ENCODE measurements at regions of chr3 and their contacts with region 1.

Region 1: DNA sequence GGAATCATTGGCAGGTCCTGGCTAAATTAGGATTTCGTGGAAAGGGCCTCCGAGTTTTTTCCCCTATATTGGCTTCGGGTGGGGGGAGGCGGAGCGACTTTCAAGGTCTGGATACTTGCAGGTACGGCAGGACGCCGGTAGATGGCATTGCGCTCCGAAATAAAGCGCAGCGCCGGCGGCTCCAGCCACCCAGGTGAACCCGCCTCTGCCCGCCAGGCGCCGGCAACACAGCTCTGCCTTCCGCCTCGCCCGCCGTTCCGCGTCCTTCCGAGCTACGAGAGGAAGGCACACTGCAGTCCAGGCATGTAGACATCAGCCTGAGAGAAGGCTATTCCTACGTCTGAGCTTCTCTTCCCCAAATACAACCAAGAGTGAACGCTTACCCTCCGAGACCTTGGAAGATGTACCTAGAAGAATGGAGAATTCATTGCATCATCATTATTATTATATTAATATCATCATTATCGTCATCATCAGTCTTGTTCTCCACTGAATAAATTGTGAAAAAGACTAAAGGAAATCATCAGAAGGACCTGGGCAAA is 514.1 kb downstream of the MECOM start:
- DNase-seq: peak; percentile 4
- ATAC-seq: peak; percentile 99
- H3K4me3 ChIP-seq: no peak overlapping the region
- H3K27ac ChIP-seq: no peak overlapping the region
- H3K4me1 ChIP-seq: no peaks in the 10 kb centered on the region; the same call in 1 of the 2 replicates
- H3K27me3 ChIP-seq: peaks cover 4 to 30% of the 10 kb centered on the region in 2 experiments
- CTCF ChIP-seq: peak; percentile 76 to 88 (median 81)
- EP300 ChIP-seq: no peak
- POLR2A ChIP-seq: no peak
- RAD21 ChIP-seq: peak; percentile 64

Region 2: GRCh38 chr3:169165196-169166158 is 16.1 kb after region 1 on chr3:
- CTCF ChIA-PET with region 1: interaction called, 14 read pairs
- POLR2A ChIA-PET with region 1: no interaction called
- RAD21 ChIA-PET with region 1: no interaction called
- SMC1A ChIA-PET with region 1: interaction called, 4 read pairs
- in situ Hi-C with region 1: no loop called
- intact Hi-C with region 1: no loop called
- DNase-seq: no peak
- ATAC-seq: no peak
- H3K4me3 ChIP-seq: no peak overlapping the region
- H3K27ac ChIP-seq: no peak overlapping the region
- H3K4me1 ChIP-seq: no peaks in the 10 kb centered on the region
- H3K27me3 ChIP-seq: no peaks in the 10 kb centered on the region; a peak in 1 of 4 replicates
- CTCF ChIP-seq: no peak
- EP300 ChIP-seq: no peak
- POLR2A ChIP-seq: no peak
- RAD21 ChIP-seq: no peak

Region 3: DNA sequence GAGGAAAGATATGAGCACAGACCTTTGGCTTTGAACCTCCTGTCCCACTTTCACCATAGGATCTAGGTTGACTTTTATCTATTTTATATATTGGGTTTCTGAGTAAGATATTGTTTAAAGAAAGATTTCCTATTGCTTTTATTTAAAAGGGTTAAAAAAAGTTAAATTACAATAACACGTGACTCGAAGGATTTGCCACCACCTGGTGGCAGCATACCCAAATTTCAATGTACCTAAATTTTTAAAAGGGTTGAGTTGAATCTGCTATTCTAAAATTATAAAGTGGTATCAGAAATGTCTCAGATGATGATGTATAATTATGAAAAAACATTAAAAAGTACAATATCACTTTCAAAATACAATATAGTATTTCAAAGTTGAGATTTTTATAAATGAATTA is 145.7 kb after region 1 on chr3:
- CTCF ChIA-PET with region 1: interaction called, 5 read pairs
- POLR2A ChIA-PET with region 1: no interaction called
- RAD21 ChIA-PET with region 1: no interaction called
- SMC1A ChIA-PET with region 1: interaction called, 3 read pairs
- in situ Hi-C with region 1: no loop called
- intact Hi-C with region 1: loop called (anchors 5 kb)
- DNase-seq: no peak
- ATAC-seq: no peak
- H3K4me3 ChIP-seq: no peak overlapping the region
- H3K27ac ChIP-seq: no peak overlapping the region
- H3K4me1 ChIP-seq: no peaks in the 10 kb centered on the region
- H3K27me3 ChIP-seq: no peaks in the 10 kb centered on the region; a peak in 1 of 4 replicates
- CTCF ChIP-seq: peak in 2 of 3 experiments; percentile 8 to 13; a peak in 1 of 6 replicates
- EP300 ChIP-seq: no peak
- POLR2A ChIP-seq: no peak
- RAD21 ChIP-seq: 0 out of 2 replicates have a peak, but pooled peaks have one; percentile 2

Region 4: GRCh38 chr3:169668957-169669681 is 519.7 kb after region 1 on chr3:
- CTCF ChIA-PET with region 1: interaction called, 15 read pairs
- POLR2A ChIA-PET with region 1: no interaction called
- RAD21 ChIA-PET with region 1: interaction called, 15 read pairs
- SMC1A ChIA-PET with region 1: interaction called, 5 read pairs
- in situ Hi-C with region 1: loop called (anchors 10 kb)
- intact Hi-C with region 1: loop called (anchors 2 kb)
- DNase-seq: no peak
- ATAC-seq: peak; percentile 96
- H3K4me3 ChIP-seq: no peak overlapping the region
- H3K27ac ChIP-seq: no peak overlapping the region
- H3K4me1 ChIP-seq: no peaks in the 10 kb centered on the region
- H3K27me3 ChIP-seq: peaks cover 9 to 28% of the 10 kb centered on the region in 2 experiments
- CTCF ChIP-seq: peak; percentile 54 to 58 (median 56)
- EP300 ChIP-seq: no peak
- POLR2A ChIP-seq: no peak
- RAD21 ChIP-seq: peak; percentile 83

Region 5: GRCh38 chr3:169744366-169745054 is 595.1 kb after region 1 on chr3:
- CTCF ChIA-PET with region 1: interaction called, 36 read pairs
- POLR2A ChIA-PET with region 1: no interaction called
- RAD21 ChIA-PET with region 1: interaction called, 8 read pairs
- SMC1A ChIA-PET with region 1: interaction called, 12 read pairs
- in situ Hi-C with region 1: no loop called
- intact Hi-C with region 1: loop called (anchors 5 kb)
- DNase-seq: no peak
- ATAC-seq: peak; percentile 48; the same call in 2 of the 3 replicates
- H3K4me3 ChIP-seq: no peak overlapping the region
- H3K27ac ChIP-seq: no peak overlapping the region
- H3K4me1 ChIP-seq: no peaks in the 10 kb centered on the region
- H3K27me3 ChIP-seq: no peaks in the 10 kb centered on the region
- CTCF ChIP-seq: peak in 2 of 3 experiments; percentile 35 to 48; a peak in 3 of 6 replicates
- EP300 ChIP-seq: no peak
- POLR2A ChIP-seq: no peak
- RAD21 ChIP-seq: peak; percentile 72

Region 6: DNA sequence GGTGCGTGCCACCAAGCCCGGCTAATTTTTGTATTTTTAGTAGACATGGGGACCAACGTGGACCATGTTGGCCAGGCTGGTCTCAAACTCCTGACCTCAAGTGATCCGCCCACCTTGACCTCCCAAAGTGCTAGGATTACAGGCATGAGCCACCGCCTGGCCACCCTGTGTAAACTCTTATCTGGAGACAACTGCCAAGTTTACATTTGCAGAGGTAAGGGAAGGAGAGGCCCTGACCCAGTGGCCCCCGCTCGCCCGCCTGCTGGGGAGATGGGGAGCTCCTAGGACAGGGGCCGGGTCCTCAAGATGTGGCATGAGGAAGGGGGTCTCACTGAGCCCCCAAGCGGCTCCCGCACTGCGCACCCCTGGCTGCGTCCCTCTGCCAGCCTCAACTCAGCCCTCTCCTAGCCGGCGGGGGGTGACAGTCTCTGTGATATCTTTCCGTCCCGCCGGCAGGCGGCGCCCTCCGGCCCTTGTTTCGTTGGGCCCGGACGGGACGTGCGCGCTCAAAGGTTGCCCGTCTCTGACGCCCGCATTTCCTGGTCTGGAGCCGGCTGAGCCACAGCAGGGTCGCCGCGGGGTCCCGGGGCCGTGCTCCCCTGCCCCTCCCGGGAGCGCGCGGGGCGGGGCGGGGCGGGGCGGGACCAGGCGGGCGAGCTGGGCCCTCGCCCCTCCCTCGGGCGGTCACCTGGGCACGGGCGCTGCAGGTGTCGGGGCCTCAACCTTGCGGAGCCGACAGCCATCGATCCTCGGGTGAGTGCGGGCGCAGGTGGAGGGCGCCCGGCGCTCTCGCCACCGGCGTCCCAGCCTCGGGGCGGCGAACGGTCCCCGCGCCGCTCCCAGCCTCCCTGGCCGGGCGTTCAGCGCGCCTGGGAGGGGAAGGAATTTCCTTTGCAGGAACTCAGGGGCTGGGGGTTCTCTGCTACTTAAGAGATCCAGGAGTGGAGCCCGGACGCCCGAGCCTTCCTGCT is 888.3 kb after region 1 on chr3 and contains the start of gene GPR160:
- CTCF ChIA-PET with region 1: no interaction called
- POLR2A ChIA-PET with region 1: no interaction called
- RAD21 ChIA-PET with region 1: no interaction called
- SMC1A ChIA-PET with region 1: no interaction called
- in situ Hi-C with region 1: loop called (anchors 25 kb)
- intact Hi-C with region 1: no loop called
- DNase-seq: no peak
- ATAC-seq: peak; percentile 93
- H3K4me3 ChIP-seq: peak within 1 kb of the TSS; percentile 87
- H3K27ac ChIP-seq: peak within 1 kb of the TSS; percentile 88
- H3K4me1 ChIP-seq: peaks cover 11% of the 10 kb centered on the region; the same call in 1 of the 2 replicates
- H3K27me3 ChIP-seq: no peaks in the 10 kb centered on the region; a peak in 2 of 4 replicates
- CTCF ChIP-seq: peak; percentile 83 to 91 (median 84)
- EP300 ChIP-seq: no peak
- POLR2A ChIP-seq: peak; percentile 79
- RAD21 ChIP-seq: peak; percentile 81
- polyA plus RNA-seq, gene GPR160: 8.8 to 14.4 TPM

Measured in GM12878 (cell line).